ENCODE measurements at regions of chr1 and their contacts with region 1.

Region 1: GRCh38 chr1:174999216-174999925 is 376 bp upstream of the CACYBP start:
- DNase-seq: peak; percentile 92 to 97
- H3K4me3 ChIP-seq: peak overlapping the region; percentile 92 to 96 (median 94)
- H3K27ac ChIP-seq: peak overlapping the region; percentile 100
- H3K4me1 ChIP-seq: peaks cover 0 to 4% (median 0%) of the 10 kb centered on the region in 4 experiments; a peak in 1 of 7 replicates
- H3K27me3 ChIP-seq: no peaks in the 10 kb centered on the region
- CTCF ChIP-seq: no peak; a peak in 1 of 4 replicates
- EP300 ChIP-seq: peak in 1 of 2 experiments; percentile 53; a peak in 1 of 3 replicates
- POLR2A ChIP-seq: peak; percentile 65 to 96
- RAD21 ChIP-seq: no peak

Region 2: DNA sequence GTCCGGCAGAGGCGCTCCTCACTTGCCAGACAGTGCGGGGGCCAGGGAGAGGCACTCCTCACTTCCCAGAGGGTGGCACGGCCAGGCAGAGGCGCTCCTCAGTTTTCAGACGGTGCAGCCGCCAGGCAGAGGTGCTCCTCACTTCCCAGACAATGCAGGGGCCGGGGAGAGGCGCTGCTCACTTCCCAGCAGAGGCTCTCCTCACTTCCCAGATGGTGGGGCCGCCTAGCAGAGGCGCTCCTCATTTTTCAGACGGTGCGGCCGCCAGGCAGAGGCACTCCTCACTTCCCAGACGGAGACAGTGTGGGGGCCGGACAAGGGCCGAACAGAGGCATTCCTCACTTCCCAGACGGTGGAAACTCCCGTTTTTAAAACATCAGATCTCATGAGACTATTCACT is 238.0 kb before region 1 on chr1:
- CTCF ChIA-PET with region 1: interaction called, 6 read pairs
- POLR2A ChIA-PET with region 1: interaction called, 12 read pairs
- DNase-seq: no peak
- H3K4me3 ChIP-seq: no peak overlapping the region
- H3K27ac ChIP-seq: no peak overlapping the region
- H3K4me1 ChIP-seq: no peaks in the 10 kb centered on the region
- H3K27me3 ChIP-seq: no peaks in the 10 kb centered on the region
- CTCF ChIP-seq: no peak
- EP300 ChIP-seq: no peak
- POLR2A ChIP-seq: no peak
- RAD21 ChIP-seq: no peak

Region 3: DNA sequence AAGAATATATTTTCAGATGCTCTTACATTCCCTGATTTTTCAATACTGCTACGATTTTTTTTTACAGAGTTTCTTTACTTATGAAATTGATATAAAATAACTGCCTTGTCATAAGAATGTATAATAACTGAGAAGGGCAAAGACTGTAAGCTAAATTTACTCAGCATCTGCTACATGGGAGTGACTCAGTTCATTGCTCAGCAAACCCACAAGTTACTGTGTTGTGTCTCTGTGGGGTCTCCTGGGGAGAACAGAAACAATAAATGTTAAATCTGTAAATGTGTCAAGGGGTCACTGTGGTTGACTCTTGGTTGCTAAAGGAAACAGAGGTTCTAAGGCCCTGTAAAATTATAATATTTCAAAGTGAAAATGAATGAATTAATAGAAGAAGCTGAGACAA is 210.0 kb before region 1 on chr1:
- CTCF ChIA-PET with region 1: interaction called, 3 read pairs
- POLR2A ChIA-PET with region 1: interaction called, 11 read pairs
- DNase-seq: no peak
- H3K4me3 ChIP-seq: no peak overlapping the region
- H3K27ac ChIP-seq: no peak overlapping the region
- H3K4me1 ChIP-seq: peaks cover 0 to 2% (median 0%) of the 10 kb centered on the region in 4 experiments; a peak in 2 of 7 replicates
- H3K27me3 ChIP-seq: no peaks in the 10 kb centered on the region
- CTCF ChIP-seq: no peak
- EP300 ChIP-seq: no peak
- POLR2A ChIP-seq: no peak
- RAD21 ChIP-seq: no peak

Region 4: GRCh38 chr1:174874331-174875053 is 124.9 kb before region 1 on chr1:
- CTCF ChIA-PET with region 1: interaction called, 3 read pairs
- POLR2A ChIA-PET with region 1: interaction called, 10 read pairs
- DNase-seq: no peak
- H3K4me3 ChIP-seq: peak overlapping the region; percentile 63 to 92 (median 75)
- H3K27ac ChIP-seq: peak overlapping the region; percentile 70
- H3K4me1 ChIP-seq: peaks cover 0 to 24% (median 12%) of the 10 kb centered on the region in 4 experiments; a peak in 6 of 7 replicates
- H3K27me3 ChIP-seq: no peaks in the 10 kb centered on the region
- CTCF ChIP-seq: no peak
- EP300 ChIP-seq: no peak
- POLR2A ChIP-seq: peak; percentile 67 to 92
- RAD21 ChIP-seq: peak in 1 of 2 experiments; percentile 7; a peak in 1 of 4 replicates

Region 5: DNA sequence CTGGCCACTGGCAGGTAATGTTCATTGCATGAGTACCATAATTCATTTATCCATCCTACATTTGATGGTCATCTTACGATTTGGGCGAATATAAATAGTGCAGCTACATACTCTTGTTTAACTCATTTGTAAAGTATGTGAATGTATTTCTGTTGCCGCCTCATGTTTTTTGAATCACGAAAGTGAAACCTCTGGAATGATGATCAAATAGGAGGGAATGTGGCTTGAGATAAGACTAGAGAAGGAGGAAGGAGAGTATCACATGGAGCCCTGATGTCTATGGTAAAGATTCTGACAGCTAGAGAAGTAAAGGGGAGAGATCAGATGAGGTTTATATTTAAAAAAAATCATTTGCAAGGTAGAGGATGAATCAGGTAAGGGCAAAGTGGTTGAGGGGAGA is 15.9 kb after region 1 on chr1:
- CTCF ChIA-PET with region 1: interaction called, 4 read pairs
- POLR2A ChIA-PET with region 1: interaction called, 66 read pairs
- DNase-seq: no peak
- H3K4me3 ChIP-seq: no peak overlapping the region
- H3K27ac ChIP-seq: no peak overlapping the region
- H3K4me1 ChIP-seq: no peaks in the 10 kb centered on the region
- H3K27me3 ChIP-seq: no peaks in the 10 kb centered on the region
- CTCF ChIP-seq: no peak
- EP300 ChIP-seq: no peak
- POLR2A ChIP-seq: no peak
- RAD21 ChIP-seq: no peak